HEK293T (cell line): ENCODE measurements at regions of chr10 and their contacts with region 1.

Region 1: DNA sequence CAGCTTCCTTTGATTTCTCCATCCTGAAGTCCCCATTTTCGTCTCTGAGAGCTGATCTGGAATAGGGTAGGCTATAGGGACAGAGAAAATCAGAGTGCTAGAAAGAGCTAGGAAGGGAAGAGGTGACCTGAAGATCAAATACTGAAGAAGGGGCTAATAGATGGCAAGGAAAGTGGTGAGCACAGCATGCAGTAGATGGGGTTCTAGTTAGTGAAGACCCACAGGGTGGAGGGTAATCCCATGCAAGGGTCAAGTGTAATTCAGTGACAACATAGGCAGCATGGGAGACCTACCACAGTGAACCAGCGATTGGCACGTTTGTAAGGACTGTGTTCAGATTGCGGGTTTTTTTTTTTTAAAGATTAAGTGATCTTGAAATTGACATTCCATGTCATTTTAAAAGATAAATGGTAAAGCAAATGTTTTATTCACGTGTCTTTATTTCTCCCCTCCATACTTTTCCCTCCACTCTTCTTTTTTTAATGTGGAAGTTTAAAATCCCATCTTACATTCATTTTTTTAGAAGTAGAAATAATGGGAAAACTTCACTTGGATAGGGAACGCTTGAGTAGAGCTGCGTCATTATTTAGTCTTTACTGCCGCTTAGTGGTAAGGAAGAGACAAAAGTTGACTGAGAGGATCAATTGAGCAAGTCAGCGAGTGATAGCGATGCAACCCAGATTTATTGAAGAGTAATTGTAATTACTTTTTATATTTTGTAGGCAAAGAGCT is 21.0 kb upstream of the ABI1 start:
- DNase-seq: peak; percentile 57

Region 2: GRCh38 chr10:26627324-26627723 is 254.4 kb before region 1 on chr10:
- CTCF ChIA-PET with region 1: no interaction called
- POLR2A ChIA-PET with region 1: no interaction called
- DNase-seq: peak; percentile 26

Region 3: GRCh38 chr10:26725837-26726727 is 155.7 kb before region 1 on chr10:
- CTCF ChIA-PET with region 1: interaction called, 50 read pairs
- POLR2A ChIA-PET with region 1: no interaction called
- DNase-seq: peak; percentile 62

Region 4: DNA sequence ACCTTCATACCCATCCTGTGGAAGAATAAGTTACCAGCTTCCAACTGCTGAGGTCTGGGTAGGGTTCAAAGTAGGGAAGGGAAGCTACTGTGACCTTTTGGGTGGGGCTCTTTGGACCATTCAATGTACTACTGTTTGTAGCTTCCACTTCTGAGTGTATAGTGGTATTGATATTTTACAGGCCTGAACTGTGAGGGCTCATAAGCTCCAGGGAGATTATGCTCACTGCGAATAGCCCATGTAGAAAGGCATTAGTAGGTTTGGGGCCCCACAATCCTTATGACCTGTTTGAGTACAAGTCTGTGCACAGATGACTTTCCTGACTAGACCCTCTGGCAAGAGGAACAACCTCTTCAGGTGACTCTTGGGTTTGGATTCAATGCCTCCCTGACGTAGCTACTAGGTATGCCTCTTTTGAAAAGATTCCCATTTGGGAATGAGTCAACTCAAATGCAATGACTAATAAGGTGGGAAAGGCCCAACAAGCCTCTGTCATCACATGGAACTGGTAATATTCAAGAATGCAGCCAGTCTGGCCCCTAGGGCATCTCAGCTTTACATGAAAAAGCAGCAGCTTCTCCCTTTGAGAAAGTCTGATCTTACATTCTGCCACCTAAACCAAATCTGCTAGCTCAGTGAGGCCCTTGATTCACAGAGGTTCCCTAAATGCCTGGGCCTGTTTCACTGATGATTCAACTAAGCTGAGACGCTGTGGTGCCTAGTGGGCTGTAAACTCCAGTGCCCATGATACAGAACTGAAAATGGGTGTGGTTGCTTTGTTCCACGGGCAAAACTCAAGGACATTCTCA is 100.8 kb before region 1 on chr10:
- CTCF ChIA-PET with region 1: no interaction called
- POLR2A ChIA-PET with region 1: no interaction called
- DNase-seq: no peak

Region 5: GRCh38 chr10:26903431-26904217 is 21.9 kb after region 1 on chr10:
- CTCF ChIA-PET with region 1: no interaction called
- POLR2A ChIA-PET with region 1: no interaction called
- DNase-seq: no peak